Endothelial cell of umbilical vein (primary cell): ENCODE measurements at regions of chr7 and their contacts with region 1.

Region 1: DNA sequence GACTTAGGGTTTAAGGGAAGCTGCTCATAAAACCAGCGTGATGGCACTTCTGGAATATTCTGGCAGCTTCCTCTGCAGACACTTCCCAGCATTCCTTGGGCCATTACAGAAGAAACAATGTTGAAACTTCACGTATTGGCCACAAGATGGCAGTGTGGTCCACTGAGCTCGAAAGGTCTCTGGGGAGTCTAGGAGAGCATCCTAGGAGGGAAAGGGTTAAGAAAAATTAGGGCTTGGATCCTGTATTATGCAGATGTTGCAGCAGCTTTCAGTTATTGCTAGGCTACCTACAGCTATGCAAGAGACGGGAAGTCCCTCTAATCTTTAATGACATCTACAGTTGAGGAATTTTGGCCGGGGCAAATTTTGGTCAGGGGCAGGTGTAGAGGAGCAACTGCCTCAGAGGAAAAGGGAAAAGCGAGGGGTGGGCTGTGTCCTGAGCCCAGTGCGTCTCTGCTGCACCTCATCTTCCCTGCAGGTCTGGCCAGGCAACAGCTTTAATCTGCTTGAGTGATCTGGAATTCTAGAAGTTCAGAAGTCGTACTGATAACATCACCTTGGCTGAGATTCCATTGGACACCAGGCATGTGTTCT is 220.7 kb upstream of the PRSS58 start:
- DNase-seq: peak; percentile 56
- H3K4me3 ChIP-seq: no peak overlapping the region
- H3K27ac ChIP-seq: no peak overlapping the region
- H3K4me1 ChIP-seq: peaks cover 4% of the 10 kb centered on the region
- H3K27me3 ChIP-seq: peaks cover 2 to 10% of the 10 kb centered on the region in 2 experiments
- CTCF ChIP-seq: peak; percentile 61 to 81
- POLR2A ChIP-seq: no peak

Region 2: GRCh38 chr7:142412551-142413193 is 65.9 kb before region 1 on chr7:
- CTCF ChIA-PET with region 1: interaction called, 15 read pairs
- POLR2A ChIA-PET with region 1: no interaction called
- dilution Hi-C with region 1: no loop called
- intact Hi-C with region 1: loop called (anchors 5 kb)
- DNase-seq: peak; percentile 50
- H3K4me3 ChIP-seq: no peak overlapping the region
- H3K27ac ChIP-seq: no peak overlapping the region
- H3K4me1 ChIP-seq: no peaks in the 10 kb centered on the region
- H3K27me3 ChIP-seq: peaks cover 0 to 2% of the 10 kb centered on the region in 2 experiments
- CTCF ChIP-seq: peak; percentile 69 to 86
- POLR2A ChIP-seq: no peak

Region 3: GRCh38 chr7:142445019-142445686 is 33.4 kb before region 1 on chr7:
- CTCF ChIA-PET with region 1: interaction called, 33 read pairs
- POLR2A ChIA-PET with region 1: no interaction called
- dilution Hi-C with region 1: no loop called
- intact Hi-C with region 1: no loop called
- DNase-seq: no peak
- H3K4me3 ChIP-seq: no peak overlapping the region
- H3K27ac ChIP-seq: no peak overlapping the region
- H3K4me1 ChIP-seq: peaks cover 31% of the 10 kb centered on the region
- H3K27me3 ChIP-seq: peaks cover 0 to 2% of the 10 kb centered on the region in 2 experiments
- CTCF ChIP-seq: peak; percentile 9
- POLR2A ChIP-seq: no peak

Region 4: GRCh38 chr7:142496545-142497041 is 18.0 kb after region 1 on chr7:
- CTCF ChIA-PET with region 1: interaction called, 30 read pairs
- POLR2A ChIA-PET with region 1: no interaction called
- dilution Hi-C with region 1: no loop called
- intact Hi-C with region 1: loop called (anchors 1 kb)
- DNase-seq: peak; percentile 41
- H3K4me3 ChIP-seq: no peak overlapping the region
- H3K27ac ChIP-seq: no peak overlapping the region
- H3K4me1 ChIP-seq: no peaks in the 10 kb centered on the region
- H3K27me3 ChIP-seq: peaks cover 14 to 27% of the 10 kb centered on the region in 2 experiments
- CTCF ChIP-seq: peak; percentile 65 to 71
- POLR2A ChIP-seq: no peak

Region 5: DNA sequence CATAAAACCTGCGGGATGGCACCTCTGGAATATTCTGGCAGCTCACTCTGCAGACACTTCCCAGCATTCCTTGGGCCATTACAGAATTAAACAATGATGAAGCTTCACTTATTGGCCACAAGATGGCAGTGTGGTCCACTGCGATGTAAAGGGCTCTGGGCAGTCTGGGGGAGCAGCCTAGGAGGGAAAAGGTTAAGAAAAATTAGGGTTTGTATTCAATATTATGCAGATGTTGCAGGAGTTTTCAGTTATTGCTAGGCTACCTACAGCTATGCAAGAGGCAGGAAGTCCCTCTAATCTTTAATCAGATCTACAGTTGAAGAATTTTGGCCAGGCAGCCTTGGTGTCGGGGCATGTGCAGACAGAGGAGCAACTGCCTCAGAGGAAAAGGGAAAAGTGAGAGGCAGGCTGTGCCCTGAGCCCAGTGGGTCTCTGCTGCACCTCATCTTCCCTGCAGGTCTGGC is 37.5 kb after region 1 on chr7:
- CTCF ChIA-PET with region 1: interaction called, 17 read pairs
- POLR2A ChIA-PET with region 1: no interaction called
- dilution Hi-C with region 1: no loop called
- intact Hi-C with region 1: no loop called
- DNase-seq: peak; percentile 65
- H3K4me3 ChIP-seq: no peak overlapping the region
- H3K27ac ChIP-seq: no peak overlapping the region
- H3K4me1 ChIP-seq: no peaks in the 10 kb centered on the region
- H3K27me3 ChIP-seq: peaks cover 9 to 13% of the 10 kb centered on the region in 2 experiments
- CTCF ChIP-seq: peak; percentile 75 to 79
- POLR2A ChIP-seq: no peak